Ovary (tissue), 10 donors: ENCODE measurements at regions of chr4 and their contacts with region 1.

Region 1: GRCh38 chr4:173025131-173025530 is 143.5 kb upstream of the GALNT7 start:
- DNase-seq: peak in 2 of 5 donors; percentile 39 to 66
- H3K4me3 ChIP-seq: no peak overlapping the region
- H3K27ac ChIP-seq: no peak overlapping the region
- H3K4me1 ChIP-seq: no peaks in the 10 kb centered on the region
- H3K27me3 ChIP-seq: no peaks in the 10 kb centered on the region
- CTCF ChIP-seq: peak; percentile 33 to 69 (median 61)
- EP300 ChIP-seq: no peak
- POLR2A ChIP-seq: no peak

Region 2: GRCh38 chr4:172881645-172882044 is 143.5 kb before region 1 on chr4:
- intact Hi-C with region 1: no loop called
- DNase-seq: no peak
- H3K4me3 ChIP-seq: no peak overlapping the region
- H3K27ac ChIP-seq: no peak overlapping the region
- H3K4me1 ChIP-seq: no peaks in the 10 kb centered on the region
- H3K27me3 ChIP-seq: no peaks in the 10 kb centered on the region
- CTCF ChIP-seq: no peak
- EP300 ChIP-seq: no peak
- POLR2A ChIP-seq: no peak

Region 3: DNA sequence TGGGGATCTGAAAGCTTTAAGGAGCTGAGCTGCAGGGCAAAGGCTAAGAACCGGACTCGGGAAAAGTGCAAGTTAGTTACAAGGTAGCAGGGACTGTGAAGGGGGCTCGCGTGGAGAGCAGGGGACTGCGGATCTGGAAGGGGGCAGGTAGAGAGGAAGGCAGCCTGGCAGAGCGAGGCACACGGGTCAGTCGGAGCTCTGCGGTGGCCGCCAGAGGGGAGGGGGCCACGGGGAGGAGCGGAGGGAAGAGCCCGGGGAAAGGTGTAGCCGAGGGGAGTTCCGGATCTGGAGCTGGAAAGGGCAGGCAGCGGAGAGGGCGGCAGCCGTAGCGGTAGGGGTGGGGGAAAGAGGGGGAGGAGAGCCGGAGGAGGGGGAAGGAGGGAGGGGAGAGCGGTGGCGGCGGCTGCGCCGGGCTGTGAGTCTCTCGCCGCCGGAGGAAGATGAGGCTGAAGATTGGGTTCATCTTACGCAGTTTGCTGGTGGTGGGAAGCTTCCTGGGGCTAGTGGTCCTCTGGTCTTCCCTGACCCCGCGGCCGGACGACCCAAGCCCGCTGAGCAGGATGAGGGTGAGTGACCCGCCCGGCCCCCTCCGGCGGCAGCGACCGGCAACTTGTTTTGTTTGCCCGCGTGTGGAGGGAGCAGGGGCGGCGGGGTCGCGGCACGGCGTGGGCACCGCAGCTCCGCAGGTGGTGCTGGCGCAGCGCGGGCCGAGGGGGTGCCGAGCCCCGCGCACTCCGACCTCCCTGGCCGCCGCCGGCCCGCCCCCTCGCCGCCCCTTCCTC is 143.5 kb after region 1 on chr4 and contains the start of gene GALNT7:
- intact Hi-C with region 1: loop called in 1 of 4 experiments (anchors 10 kb)
- DNase-seq: peak; percentile 69 to 77 (median 75)
- H3K4me3 ChIP-seq: peak within 1 kb of the TSS; percentile 73
- H3K27ac ChIP-seq: peak within 1 kb of the TSS; percentile 90 to 96
- H3K4me1 ChIP-seq: peaks cover 2% of the 10 kb centered on the region
- H3K27me3 ChIP-seq: no peaks in the 10 kb centered on the region
- CTCF ChIP-seq: no peak
- EP300 ChIP-seq: no peak
- POLR2A ChIP-seq: no peak
- total RNA-seq, gene GALNT7: 16.3 to 23.7 (median 19.0) TPM

Region 4: DNA sequence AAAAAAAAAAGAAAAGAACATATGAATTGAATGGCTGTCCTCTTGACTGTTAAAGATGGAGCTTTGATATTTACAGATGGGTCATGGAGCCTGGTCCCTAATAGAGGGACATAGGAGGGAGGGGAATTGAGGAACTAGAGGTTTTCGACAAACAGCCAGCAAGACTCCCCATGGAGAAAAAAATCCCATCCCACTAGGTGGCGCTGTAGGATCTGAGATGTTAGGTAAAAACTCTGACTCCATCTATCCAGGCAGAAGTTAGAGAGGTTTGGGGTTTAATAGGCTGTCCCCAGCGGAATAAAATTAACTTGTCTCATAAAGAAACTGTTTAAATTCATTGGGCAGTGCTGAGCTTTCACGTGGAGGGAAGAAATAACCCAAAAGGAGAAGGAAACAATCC is 263.2 kb after region 1 on chr4:
- intact Hi-C with region 1: loop called in 1 of 4 experiments (anchors 10 kb)
- DNase-seq: peak in 1 of 5 donors; percentile 45
- H3K4me3 ChIP-seq: no peak overlapping the region
- H3K27ac ChIP-seq: no peak overlapping the region
- H3K4me1 ChIP-seq: no peaks in the 10 kb centered on the region
- H3K27me3 ChIP-seq: no peaks in the 10 kb centered on the region
- CTCF ChIP-seq: no peak
- EP300 ChIP-seq: no peak
- POLR2A ChIP-seq: no peak

Region 5: GRCh38 chr4:173370477-173371291 is 345.6 kb after region 1 on chr4 and contains the start of gene SAP30:
- intact Hi-C with region 1: no loop called
- DNase-seq: peak; percentile 98 to 100 (median 99)
- H3K4me3 ChIP-seq: peak within 1 kb of the TSS; percentile 67
- H3K27ac ChIP-seq: peak within 1 kb of the TSS; percentile 76 to 92
- H3K4me1 ChIP-seq: peaks cover 6% of the 10 kb centered on the region
- H3K27me3 ChIP-seq: no peaks in the 10 kb centered on the region
- CTCF ChIP-seq: no peak
- EP300 ChIP-seq: no peak
- POLR2A ChIP-seq: peak; percentile 93
- total RNA-seq, gene SAP30: 14.8 to 32.3 (median 17.1) TPM